ENCODE measurements at regions of chr20 and their contacts with region 1.

Region 1: DNA sequence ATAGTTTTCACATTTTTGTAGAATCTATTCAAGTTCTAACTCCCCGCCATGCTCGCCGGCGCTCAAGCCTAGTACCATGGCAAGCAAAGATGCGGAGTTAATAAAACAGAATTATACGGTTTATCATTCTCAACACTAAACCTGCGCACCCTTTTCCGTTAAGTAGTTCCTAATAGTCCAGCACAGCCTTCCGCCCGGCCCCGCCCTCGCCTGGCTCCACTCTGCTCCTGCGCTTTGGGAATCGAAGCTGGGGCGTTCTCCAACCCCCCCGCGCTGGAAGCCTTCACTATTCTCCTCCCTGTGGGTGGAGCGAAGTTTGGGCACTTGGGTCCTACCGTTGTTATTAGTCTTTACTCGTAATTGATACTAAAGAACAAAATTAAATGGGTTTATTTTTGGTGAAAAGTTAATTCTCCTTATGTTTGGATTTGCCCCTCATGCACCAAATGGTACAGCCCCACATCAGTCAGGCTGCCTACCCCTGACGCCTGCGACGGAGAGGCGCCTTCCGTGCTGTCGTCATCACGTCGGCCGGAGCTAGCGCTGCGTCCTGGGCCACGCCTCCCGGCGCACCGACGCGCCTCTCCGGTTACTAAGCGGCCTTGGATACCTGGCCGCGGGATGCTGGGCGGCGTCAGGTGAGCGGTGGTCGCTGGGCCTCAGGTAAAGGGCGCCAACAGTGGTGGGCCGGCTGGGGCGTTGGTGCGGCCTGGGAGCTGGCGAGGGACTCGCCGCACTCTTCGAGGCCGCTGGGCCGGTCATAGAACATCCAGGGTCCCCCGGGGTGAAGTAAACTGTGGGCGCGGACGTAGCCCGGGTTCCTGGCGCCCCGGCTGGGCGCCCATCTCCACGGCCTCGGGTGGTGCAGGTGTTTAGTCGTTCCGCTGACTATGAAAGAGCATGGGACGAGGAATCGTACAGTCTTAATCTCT is at the start of gene IFT52:
- DNase-seq: peak; percentile 90 to 99
- H3K4me3 ChIP-seq: peak within 1 kb of the TSS; percentile 57
- CTCF ChIP-seq: no peak
- POLR2A ChIP-seq: no peak
- total RNA-seq, gene IFT52: 8.5 to 17.2 (median 12.7) TPM

Region 2: DNA sequence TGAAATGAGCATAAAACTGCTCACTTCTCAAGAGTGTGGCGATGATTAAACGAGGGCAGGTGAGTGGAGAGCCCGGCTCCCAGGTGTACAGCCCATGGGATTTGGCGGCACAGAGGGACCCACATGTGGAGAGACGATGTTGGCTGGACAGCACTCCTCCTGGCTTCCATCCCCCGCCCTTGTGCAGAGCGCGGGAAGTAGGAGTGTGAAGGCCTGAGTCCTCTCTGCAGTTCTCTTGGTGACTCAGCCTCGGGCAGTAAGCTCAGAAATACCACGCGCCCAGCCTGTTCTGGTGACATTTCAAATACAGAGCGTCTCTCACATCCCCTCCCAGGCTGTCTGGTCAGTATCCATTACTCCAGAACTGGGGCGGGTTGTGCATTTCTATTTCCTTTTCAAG is 227.2 kb before region 1 on chr20:
- intact Hi-C with region 1: no loop called
- DNase-seq: peak in 1 of 2 donors; percentile 60
- H3K4me3 ChIP-seq: no peak overlapping the region
- CTCF ChIP-seq: no peak
- POLR2A ChIP-seq: no peak

Region 3: GRCh38 chr20:43545837-43546578 is 44.6 kb before region 1 on chr20:
- intact Hi-C with region 1: loop called (anchors 1 kb)
- DNase-seq: no peak
- H3K4me3 ChIP-seq: no peak overlapping the region
- CTCF ChIP-seq: no peak
- POLR2A ChIP-seq: no peak